ENCODE measurements at regions of chr9 and their contacts with region 1.

Region 1: DNA sequence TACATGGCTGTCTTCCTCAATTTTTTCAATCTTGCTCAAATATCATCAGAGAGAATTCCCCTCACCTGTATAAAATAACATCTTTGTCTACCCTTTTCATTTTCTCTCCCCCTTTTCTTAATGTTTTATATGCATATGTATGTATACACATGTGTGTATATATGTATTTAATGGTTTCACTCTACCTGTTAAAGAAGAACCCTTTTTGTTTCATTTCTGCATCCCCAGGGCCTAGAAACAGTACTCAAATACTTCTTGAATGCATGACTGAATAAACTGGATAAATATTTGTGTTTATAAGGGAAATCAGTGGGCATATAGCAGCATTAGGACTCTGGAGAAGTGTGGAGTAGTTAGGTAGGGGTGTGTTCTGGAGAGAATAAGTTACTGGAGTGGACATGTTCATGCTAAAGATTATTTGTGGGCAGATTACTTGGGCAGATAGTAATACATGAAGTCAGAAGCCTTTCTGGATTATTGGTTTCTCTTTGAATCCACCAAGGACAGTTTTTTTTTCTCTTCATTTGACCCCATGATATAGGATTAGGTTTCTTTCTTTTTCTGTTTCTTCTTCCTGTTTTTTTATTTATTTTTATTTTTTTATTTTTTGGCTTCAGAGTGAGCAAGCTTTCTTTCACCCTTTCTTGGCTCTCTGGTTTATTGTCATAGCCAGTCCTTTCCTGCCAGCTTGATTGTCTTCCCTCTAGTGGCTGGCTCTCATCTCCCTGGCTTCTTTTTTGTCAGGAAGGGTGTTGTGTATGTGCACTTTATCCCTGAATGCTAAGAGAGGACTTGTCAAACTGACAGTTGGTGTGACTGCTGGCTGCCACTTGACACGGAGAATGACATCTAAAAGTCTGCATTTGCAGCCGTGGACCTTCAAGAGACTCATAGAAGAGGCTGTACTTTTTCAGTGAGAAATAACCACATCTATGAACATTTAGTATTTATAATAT is 89.3 kb downstream of the ZCCHC7 start:
- DNase-seq: no peak

Region 2: DNA sequence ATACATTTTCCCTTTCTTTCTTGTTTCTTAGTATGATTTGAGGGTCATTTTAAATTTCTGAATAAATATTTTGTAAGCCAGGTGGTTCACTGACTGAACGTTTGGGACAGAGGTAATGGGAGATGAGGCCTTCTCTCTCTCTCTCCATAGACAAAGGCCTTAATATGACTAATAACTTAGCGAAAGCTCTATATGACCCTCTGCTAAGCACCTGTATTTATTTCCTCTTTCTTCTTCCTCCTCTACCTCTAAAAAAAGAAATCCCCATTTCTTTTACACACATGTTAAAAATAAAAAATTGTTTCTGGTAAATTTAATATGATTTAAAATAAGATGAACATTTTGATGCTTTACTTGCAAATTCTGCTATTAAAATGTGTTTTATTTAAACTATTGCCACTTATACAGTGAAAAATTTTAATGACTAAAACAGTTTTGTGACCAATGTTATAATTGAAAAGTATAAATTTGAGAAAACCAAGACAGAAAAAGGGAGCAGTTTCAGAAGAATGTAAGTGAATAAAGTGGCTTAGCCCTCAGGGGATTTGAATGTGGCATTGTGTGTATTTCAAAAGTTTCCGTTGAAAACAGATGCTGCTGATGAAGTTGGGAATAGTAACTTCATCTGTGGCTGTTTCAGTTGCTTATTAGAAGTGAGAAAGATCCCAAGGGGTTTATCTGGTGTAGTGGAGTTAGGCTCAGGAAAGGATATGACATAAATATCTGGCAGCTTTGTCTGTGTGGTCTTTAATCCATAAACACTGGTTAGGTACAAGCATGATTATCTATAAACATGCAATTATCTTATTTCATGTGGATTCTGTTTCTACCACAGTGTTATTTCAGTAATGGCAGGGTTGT is 84.2 kb after region 1 on chr9:
- intact Hi-C with region 1: loop called (anchors 10 kb)
- DNase-seq: no peak

Measured in cardiac septum (tissue), 1 donor.